Mammary epithelial cell (primary cell): ENCODE measurements at regions of chr19 and their contacts with region 1.

Region 1: DNA sequence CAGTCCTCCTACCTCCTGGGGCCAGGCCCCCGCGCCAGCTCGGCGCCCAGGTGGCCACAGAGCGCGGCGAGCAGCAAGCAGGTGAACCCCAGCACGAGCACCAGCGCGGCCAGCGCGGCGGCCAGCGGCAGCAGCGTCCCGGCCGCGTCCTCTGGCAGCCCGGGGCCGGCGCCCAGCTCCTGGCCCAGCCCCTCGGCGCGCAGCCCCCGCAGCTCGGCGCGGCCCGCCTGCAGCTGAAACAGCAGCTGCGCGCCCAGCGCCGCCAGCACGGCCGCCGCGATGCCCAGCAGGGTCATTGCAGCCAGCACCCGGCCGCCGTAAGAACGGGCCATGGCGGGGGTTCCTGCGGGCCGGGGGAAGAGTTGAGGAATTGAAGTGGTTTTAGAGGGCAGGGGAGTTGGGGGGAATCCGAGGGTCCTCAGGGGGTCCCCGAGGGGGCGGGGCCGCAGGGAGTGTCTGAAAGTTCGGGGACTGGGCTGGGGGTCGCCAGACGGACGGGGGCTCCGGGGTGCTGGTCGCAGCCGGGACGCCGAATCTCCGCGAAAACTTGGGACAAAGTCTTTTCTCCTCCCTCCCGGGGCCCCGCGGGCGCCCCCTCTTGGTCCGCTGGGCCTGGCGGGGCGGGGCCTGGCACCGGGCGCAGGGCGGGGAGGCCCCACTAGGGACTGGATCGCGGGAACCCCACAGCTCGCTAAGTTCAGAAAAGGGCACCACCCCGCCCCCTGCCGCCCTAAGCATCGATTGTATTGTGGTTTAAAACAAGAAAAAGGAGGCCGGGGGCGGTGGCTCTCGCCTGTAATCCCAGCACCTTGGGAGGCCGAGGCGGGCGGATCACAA is at the start of gene TMEM221:
- DNase-seq: no peak
- H3K4me3 ChIP-seq: peak within 1 kb of the TSS; percentile 37 to 46 (median 43)
- H3K27ac ChIP-seq: no peak within 1 kb of the TSS
- H3K4me1 ChIP-seq: peaks cover 8% of the 10 kb centered on the region
- H3K27me3 ChIP-seq: no peaks in the 10 kb centered on the region
- CTCF ChIP-seq: peak in 1 of 2 donors; percentile 58
- total RNA-seq, gene TMEM221: 0.17 to 1.4 TPM

Region 2: DNA sequence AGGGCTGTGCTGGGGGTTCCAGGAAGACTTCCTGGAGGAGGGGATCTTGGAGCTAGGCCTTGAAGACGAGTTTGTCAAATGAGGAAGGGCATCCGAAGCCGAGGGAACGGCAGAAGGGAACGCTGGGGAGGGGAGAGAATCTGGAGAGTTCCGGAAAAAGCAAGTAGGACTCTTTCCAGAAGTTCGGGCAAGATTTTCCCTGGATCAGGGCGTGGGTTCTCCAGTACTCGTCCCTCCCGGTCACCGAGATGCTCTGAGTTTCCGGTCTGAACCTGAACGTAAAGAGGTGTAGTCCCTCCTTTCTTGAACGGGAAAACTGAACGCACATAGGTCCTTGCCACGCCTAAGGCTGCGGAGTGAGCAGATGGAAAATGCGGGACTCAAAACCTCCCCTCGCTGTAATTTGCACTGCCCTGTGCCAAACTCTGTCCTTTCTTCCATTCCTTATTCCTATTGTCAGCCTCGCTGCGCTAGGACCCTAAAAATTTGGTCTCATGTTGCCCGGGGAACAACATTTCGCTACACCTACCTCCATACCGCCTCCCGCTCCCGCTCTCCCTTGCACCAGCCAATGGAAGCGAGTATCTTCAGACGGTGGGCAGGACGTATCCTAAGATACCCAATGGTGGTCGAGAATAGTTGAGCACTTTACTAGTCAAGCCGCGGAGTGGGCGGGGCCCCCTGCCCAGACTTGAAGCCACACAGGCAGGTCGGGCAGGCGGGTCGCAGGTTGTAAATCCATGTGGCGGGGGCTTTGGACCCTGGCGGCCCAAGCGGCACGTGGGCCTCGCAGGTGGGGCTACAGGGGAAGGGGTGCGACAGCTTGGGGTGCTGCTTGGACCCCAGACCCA is 111.3 kb before region 1 on chr19 and contains the start of gene GTPBP3:
- CTCF ChIA-PET with region 1: no interaction called
- dilution Hi-C with region 1: loop called (anchors 25 kb)
- in situ Hi-C with region 1: no loop called
- intact Hi-C with region 1: no loop called
- DNase-seq: peak; percentile 99
- H3K4me3 ChIP-seq: peak within 1 kb of the TSS; percentile 69 to 87 (median 73)
- H3K27ac ChIP-seq: peak within 1 kb of the TSS; percentile 69
- H3K4me1 ChIP-seq: peaks cover 27% of the 10 kb centered on the region
- H3K27me3 ChIP-seq: no peaks in the 10 kb centered on the region
- CTCF ChIP-seq: no peak
- total RNA-seq, gene GTPBP3: 17.5 to 35.3 TPM

Region 3: GRCh38 chr19:17409990-17410389 is 38.4 kb before region 1 on chr19:
- CTCF ChIA-PET with region 1: no interaction called
- dilution Hi-C with region 1: loop called (anchors 5 kb)
- in situ Hi-C with region 1: no loop called
- intact Hi-C with region 1: no loop called
- DNase-seq: no peak
- H3K4me3 ChIP-seq: no peak overlapping the region
- H3K27ac ChIP-seq: no peak overlapping the region
- H3K4me1 ChIP-seq: peaks cover 9% of the 10 kb centered on the region
- H3K27me3 ChIP-seq: no peaks in the 10 kb centered on the region
- CTCF ChIP-seq: no peak

Region 4: DNA sequence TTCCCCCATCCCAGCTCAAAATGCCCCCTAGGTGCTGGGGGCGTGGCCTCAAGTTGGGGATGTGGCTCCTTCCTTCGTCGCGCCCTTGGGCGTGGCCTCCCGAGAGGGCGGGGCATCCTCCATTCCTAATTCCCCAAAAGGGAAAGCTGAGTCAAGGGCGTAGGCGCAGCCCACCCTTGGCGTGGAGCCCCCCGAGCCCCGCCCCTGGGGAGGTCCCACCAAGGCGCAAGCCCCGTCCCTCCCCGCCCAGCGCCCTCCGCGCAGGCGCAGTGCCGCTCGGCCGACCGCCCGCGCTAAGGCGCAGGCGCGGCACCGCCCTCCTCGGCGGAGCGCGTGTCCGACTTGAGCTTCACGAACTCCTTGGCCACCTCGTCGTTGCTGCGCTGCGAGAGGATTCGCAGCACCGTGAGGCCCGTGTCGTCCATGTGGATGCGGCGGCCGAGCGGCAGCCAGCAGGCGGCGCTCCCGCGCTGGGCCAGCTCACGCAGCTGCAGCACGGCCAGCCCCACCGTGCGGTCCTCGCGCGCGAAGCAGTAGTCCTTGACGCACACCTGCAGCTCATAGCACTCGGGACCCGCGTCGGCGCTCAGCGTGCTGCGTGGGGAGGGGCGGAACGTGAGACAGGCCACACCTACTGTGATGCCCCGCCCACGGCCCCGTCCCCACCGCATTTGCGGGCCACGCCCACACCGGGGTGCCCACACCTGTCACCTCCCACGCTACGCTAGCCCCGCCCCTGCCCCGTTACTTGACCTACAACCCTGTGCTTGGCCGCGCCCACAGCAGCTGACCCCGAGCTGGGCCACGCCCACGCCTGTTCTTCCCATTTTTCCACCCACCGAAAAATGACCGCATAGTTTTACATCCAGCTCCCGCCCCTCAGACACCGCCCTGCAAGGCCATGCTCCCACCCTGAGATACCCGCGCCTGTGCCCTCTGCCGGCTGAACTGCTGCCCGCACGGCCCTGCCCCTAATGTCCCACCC is 157.7 kb after region 1 on chr19:
- CTCF ChIA-PET with region 1: interaction called, 11 read pairs
- dilution Hi-C with region 1: no loop called
- in situ Hi-C with region 1: no loop called
- intact Hi-C with region 1: no loop called
- DNase-seq: peak; percentile 77
- H3K4me3 ChIP-seq: peak overlapping the region in 2 of 3 experiments; percentile 8 to 36
- H3K27ac ChIP-seq: no peak overlapping the region
- H3K4me1 ChIP-seq: peaks cover 6% of the 10 kb centered on the region
- H3K27me3 ChIP-seq: peaks cover 4% of the 10 kb centered on the region
- CTCF ChIP-seq: peak; percentile 40 to 62

Region 5: DNA sequence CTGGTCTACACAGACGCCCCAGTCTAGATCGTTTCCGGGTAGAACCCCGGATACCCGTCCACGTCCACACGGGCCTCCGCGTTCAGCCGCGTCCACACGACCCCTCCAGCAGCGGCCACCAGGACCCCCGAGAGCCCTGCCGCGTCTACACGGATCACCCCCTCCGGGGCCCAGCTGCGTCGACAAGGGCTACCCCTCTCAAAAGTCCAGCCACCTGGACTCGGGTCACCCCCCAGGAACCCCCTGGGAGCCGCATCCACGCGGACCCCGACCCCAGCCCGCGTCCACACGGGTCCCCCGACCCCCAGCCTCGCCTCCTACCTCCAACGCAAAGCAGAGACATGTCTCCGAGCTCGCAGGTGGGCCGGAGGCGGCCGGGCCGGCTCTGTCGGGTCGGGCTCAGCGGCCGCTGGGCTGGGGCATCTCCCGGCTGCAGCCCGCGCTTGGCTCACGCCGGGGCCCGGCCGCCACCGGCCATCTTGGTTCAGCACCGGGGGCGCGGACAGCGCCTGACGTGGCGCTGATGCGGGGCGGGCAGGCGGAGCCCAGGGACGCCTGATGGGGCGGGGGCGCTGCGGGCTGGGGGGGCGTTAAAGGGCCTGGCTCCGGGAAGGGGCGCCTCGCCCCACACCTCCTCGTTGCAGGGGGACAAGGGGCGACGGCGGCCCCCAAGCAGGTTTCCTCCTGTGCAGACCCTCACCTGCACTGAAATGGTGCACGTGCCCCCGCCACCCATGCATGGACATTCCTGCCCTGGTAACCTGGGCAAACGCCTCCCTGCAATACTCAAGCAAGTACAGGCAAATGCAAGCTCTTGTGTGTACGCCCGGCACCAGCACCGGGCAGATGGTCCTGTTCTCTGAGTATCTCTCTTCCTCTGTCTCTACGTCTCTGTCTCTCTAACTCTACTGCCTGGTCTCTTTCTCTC is 239.8 kb after region 1 on chr19 and contains the start of gene UNC13A:
- CTCF ChIA-PET with region 1: no interaction called
- dilution Hi-C with region 1: no loop called
- in situ Hi-C with region 1: no loop called
- intact Hi-C with region 1: loop called (anchors 5 kb)
- DNase-seq: peak; percentile 39
- H3K4me3 ChIP-seq: peak within 1 kb of the TSS in 1 of 3 experiments; percentile 17
- H3K27ac ChIP-seq: no peak within 1 kb of the TSS
- H3K4me1 ChIP-seq: peaks cover 10% of the 10 kb centered on the region
- H3K27me3 ChIP-seq: peaks cover 15% of the 10 kb centered on the region
- CTCF ChIP-seq: no peak
- total RNA-seq, gene UNC13A: 0.73 TPM in 1 of 2 donors, not detected in the other

Region 6: DNA sequence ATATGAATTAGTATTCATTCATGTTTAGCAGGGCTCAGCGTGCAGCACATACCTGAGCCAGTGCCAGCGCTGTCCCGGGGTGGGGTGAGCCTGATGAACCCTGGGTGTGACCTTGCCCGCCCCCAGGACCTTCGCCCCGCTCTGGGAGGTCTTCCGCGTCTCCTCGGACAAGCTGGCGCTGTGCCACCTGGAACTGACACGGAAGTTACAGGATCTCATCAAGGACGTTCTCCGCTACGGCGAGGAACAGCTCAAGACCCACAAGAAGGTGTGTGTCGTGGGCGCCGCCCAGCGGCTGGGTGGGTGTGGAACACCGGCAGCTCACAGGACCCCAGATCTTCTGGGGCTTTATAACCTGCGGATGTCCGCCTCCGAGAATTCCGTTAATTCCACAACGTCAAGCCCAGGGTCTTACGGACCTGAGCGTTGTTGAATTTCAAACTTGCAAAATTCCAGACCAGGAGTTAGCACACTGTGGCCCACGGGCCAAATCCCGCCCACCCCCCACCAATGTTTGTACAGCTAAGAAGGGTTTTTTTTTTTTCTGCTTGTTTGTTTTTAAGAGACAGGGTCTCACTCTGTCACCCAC is 318.3 kb after region 1 on chr19:
- CTCF ChIA-PET with region 1: no interaction called
- dilution Hi-C with region 1: no loop called
- in situ Hi-C with region 1: no loop called
- intact Hi-C with region 1: loop called (anchors 5 kb)
- DNase-seq: peak; percentile 68
- H3K4me3 ChIP-seq: peak overlapping the region; percentile 1 to 49 (median 40)
- H3K27ac ChIP-seq: no peak overlapping the region
- H3K4me1 ChIP-seq: peaks cover 5% of the 10 kb centered on the region
- H3K27me3 ChIP-seq: no peaks in the 10 kb centered on the region
- CTCF ChIP-seq: peak; percentile 86 to 99